Right ventricle myocardium superior (tissue), 1 donor: ENCODE measurements at regions of chr11 and their contacts with region 1.

Region 1: DNA sequence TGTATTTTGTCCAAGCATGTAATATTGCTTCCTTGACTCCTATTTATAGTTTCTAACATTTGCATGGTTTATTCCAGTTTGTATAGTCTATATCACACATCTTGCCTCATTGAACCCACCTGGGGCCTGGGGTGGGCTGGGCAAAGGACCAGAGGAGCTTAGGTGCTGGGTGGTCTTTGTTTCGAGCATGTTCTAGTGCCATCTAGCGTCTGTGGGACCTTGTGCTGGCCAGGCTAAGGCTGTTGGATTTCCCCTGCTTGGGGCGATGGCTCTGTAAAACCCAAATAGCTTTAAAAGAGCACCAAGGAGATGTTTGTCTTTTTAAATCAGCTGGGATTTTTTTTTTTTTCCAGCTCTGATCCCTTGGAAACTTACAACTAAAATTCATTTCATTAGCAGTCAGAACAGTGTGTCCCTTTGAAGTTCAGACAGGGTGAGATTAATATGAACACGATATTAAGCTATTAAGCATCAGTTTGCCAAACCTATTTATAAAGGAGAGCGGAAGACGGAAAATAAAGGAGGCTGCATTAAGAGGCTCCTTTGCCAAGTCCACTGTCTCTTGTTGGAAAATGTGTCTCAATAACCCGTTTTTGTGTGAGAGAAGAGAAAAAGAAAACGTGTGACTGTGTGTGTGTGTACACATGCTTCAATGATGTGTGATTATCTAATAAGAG is 157.4 kb downstream of the COMMD9 start:
- DNase-seq: peak; percentile 58
- ATAC-seq: peak; percentile 87

Region 2: GRCh38 chr11:35822815-35823495 is 308.9 kb before region 1 on chr11:
- intact Hi-C with region 1: loop called (anchors 5 kb)
- DNase-seq: no peak
- ATAC-seq: no peak

Region 3: GRCh38 chr11:35953081-35953760 is 178.6 kb before region 1 on chr11:
- intact Hi-C with region 1: no loop called
- DNase-seq: no peak
- ATAC-seq: no peak

Region 4: DNA sequence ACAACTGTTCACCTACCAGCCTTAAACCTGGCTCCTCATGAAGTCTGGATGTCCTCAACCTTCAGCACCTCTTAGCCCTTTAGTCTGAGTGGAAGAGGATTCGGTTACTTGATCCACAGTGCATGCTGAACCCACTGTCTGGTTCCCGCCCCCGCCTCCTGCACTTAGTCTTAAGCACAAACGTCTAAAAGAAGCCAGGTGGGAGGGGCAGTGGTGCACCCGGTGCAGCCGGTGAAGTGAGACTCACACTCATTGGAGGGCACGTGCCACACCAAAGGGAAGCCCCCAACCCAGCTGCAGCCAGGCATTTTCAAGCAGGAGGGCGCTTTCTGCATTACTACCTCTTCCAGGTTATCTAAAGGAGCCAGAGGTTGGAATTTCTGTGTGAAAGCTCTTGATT is 10.6 kb after region 1 on chr11:
- intact Hi-C with region 1: no loop called
- DNase-seq: no peak
- ATAC-seq: no peak

Region 5: DNA sequence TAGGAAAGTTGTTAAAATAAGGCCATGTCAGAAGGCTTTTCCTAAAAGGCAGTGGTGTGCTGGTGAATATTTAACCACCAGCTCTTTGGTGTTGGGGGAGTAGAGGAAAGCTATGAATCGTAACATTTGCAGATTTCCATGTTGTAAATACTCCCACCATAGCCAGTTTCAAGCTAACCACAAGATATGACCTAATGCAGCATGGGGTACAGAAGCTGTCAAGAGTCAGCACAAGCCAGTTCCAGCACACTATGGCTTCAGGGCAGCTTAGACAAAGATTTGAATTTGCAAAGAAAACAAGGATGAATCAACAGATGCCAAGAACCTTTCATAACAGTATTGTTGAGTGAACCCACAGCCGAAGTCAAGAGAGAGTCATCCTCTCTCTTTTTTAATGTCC is 117.4 kb after region 1 on chr11:
- intact Hi-C with region 1: no loop called
- DNase-seq: no peak
- ATAC-seq: no peak

Region 6: DNA sequence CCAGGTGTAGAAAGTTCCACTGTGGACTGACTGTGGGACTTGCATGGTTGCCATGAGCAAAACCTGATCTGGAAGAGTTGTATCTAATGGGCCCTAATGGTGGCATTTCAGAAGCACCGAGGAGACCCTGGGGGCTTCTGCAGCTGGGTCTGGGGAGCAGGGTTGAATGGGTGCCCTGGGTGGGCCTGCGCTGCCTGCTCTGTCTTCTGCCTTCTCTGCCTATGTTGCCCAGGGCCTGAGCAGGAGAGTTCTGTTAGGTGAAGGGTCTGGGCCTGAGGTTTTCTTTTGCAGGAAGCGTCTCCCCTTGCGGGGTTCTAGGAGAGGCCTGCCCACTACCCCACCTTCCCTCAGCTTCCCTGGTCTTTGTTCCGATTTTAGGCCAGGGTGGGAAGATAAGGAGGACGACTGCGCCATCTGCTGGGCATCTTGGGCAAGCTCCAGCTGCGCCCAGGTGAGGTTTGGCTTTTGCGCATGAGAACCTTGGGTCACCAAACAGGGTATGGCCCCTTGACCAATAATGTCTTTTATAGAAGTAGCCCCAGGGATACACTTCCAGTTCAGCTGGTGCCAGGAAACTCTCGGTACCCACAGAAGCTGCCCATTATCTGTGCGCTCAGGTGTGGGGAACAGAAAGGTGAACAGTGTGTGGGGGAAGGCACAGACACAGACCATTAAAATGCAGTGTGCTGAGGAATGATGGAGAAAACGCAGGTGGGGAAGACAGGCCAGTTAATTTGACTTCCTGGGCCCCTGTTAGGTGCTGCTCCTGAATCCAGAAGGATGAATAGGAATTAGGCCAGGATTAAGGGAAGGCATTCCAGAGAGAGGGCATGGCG is 134.2 kb after region 1 on chr11:
- intact Hi-C with region 1: loop called (anchors 10 kb)
- DNase-seq: peak; percentile 65
- ATAC-seq: peak; percentile 79